CD8-positive, alpha-beta T cell (primary cell): ENCODE measurements at regions of chr17 and their contacts with region 1.

Region 1: DNA sequence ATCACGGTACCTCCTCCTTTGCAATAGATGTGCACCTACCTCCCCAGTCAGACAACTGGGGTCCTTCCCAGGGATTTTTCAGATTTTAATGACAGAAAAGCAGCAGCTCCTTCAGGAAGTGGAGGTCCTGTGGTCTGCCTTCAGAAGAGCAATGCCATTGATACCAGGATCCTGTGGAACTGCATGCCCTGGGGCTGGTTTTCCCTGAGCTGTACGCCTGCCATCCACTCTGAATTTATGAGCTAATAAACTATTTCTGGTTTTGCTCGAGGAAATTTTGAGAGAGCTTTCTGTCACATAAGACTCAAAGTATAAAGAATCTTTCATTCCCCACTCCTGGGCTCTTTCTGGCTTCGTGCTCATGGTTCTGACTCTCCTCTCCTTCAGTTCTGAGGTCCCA is 10.0 kb upstream of the CCL23 start:
- DNase-seq: no peak
- ATAC-seq: no peak
- H3K4me3 ChIP-seq: no peak overlapping the region
- H3K4me3 Mint-ChIP-seq: no peak overlapping the region
- H3K27ac ChIP-seq: no peak overlapping the region
- H3K27ac Mint-ChIP-seq: no peak overlapping the region
- H3K4me1 ChIP-seq: no peaks in the 10 kb centered on the region
- H3K4me1 Mint-ChIP-seq: no peaks in the 10 kb centered on the region
- H3K27me3 ChIP-seq: no peaks in the 10 kb centered on the region
- H3K27me3 Mint-ChIP-seq: peaks cover 17% of the 10 kb centered on the region
- CTCF ChIP-seq: no peak

Region 2: DNA sequence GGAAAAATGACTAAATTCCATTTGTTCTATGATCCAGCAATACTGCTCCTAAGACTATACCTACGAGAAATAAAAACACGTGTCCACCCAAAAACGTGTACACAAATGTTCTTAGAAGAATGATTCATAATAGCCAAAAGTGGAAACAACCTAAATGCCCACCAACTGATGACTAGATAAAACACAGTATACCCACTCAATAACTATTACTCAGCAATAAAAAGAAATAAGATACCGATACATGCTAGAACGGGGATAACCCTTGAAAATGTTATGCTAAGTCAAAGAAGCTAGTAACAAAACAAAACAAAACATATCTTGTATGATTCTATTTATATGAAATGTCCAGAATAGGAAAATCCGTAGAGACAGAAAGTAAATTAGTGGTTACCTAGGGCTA is 64.1 kb before region 1 on chr17:
- CTCF ChIA-PET with region 1: no interaction called
- POLR2A ChIA-PET with region 1: no interaction called
- intact Hi-C with region 1: no loop called
- DNase-seq: no peak
- ATAC-seq: no peak
- H3K4me3 ChIP-seq: no peak overlapping the region
- H3K4me3 Mint-ChIP-seq: no peak overlapping the region
- H3K27ac ChIP-seq: no peak overlapping the region
- H3K27ac Mint-ChIP-seq: no peak overlapping the region
- H3K4me1 ChIP-seq: no peaks in the 10 kb centered on the region
- H3K4me1 Mint-ChIP-seq: no peaks in the 10 kb centered on the region
- H3K27me3 ChIP-seq: no peaks in the 10 kb centered on the region
- H3K27me3 Mint-ChIP-seq: peaks cover 2% of the 10 kb centered on the region
- CTCF ChIP-seq: no peak

Region 3: GRCh38 chr17:36008998-36009665 is 18.6 kb before region 1 on chr17:
- CTCF ChIA-PET with region 1: interaction called, 5 read pairs
- POLR2A ChIA-PET with region 1: no interaction called
- intact Hi-C with region 1: loop called in 1 of 2 experiments (anchors 2 kb)
- DNase-seq: no peak
- ATAC-seq: no peak
- H3K4me3 ChIP-seq: no peak overlapping the region
- H3K4me3 Mint-ChIP-seq: no peak overlapping the region
- H3K27ac ChIP-seq: no peak overlapping the region
- H3K27ac Mint-ChIP-seq: no peak overlapping the region
- H3K4me1 ChIP-seq: no peaks in the 10 kb centered on the region
- H3K4me1 Mint-ChIP-seq: peaks cover 8% of the 10 kb centered on the region
- H3K27me3 ChIP-seq: no peaks in the 10 kb centered on the region
- H3K27me3 Mint-ChIP-seq: no peaks in the 10 kb centered on the region
- CTCF ChIP-seq: no peak

Region 4: DNA sequence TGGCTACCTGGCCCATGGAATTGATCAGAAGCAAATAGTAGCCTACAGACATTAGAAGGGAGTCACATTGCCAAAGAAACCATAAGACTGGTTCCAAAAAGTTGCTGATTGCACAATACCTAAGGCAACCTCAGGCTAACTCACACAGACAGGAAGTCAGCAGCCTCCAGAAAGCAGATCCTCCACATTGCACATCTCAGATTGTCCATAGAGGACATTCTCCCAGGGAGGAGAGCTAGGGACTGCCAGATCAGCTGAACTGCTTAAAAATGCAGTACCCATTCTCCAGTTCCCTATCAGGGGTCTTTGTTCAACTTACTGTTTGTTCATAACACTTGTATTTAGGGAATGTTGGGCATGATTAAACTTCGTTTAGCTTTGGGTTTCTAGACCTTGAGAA is 58.0 kb after region 1 on chr17:
- CTCF ChIA-PET with region 1: no interaction called
- POLR2A ChIA-PET with region 1: no interaction called
- intact Hi-C with region 1: no loop called
- DNase-seq: peak in 2 of 9 experiments; percentile 47 to 63
- ATAC-seq: no peak
- H3K4me3 ChIP-seq: no peak overlapping the region
- H3K4me3 Mint-ChIP-seq: no peak overlapping the region
- H3K27ac ChIP-seq: peak overlapping the region in 1 of 2 experiments; percentile 46
- H3K27ac Mint-ChIP-seq: peak overlapping the region; percentile 41
- H3K4me1 ChIP-seq: peaks cover 25% of the 10 kb centered on the region
- H3K4me1 Mint-ChIP-seq: peaks cover 58% of the 10 kb centered on the region
- H3K27me3 ChIP-seq: no peaks in the 10 kb centered on the region
- H3K27me3 Mint-ChIP-seq: no peaks in the 10 kb centered on the region
- CTCF ChIP-seq: no peak